Ovary (tissue), 10 donors: ENCODE measurements at regions of chr20 and their contacts with region 1.

Region 1: GRCh38 chr20:330233-331149 is 5.1 kb downstream of the SOX12 start:
- DNase-seq: peak; percentile 53 to 71 (median 56)
- H3K4me3 ChIP-seq: no peak overlapping the region
- H3K27ac ChIP-seq: no peak overlapping the region
- H3K4me1 ChIP-seq: peaks cover 5% of the 10 kb centered on the region
- H3K27me3 ChIP-seq: no peaks in the 10 kb centered on the region
- CTCF ChIP-seq: peak; percentile 60 to 82 (median 66)
- EP300 ChIP-seq: no peak
- POLR2A ChIP-seq: no peak

Region 2: DNA sequence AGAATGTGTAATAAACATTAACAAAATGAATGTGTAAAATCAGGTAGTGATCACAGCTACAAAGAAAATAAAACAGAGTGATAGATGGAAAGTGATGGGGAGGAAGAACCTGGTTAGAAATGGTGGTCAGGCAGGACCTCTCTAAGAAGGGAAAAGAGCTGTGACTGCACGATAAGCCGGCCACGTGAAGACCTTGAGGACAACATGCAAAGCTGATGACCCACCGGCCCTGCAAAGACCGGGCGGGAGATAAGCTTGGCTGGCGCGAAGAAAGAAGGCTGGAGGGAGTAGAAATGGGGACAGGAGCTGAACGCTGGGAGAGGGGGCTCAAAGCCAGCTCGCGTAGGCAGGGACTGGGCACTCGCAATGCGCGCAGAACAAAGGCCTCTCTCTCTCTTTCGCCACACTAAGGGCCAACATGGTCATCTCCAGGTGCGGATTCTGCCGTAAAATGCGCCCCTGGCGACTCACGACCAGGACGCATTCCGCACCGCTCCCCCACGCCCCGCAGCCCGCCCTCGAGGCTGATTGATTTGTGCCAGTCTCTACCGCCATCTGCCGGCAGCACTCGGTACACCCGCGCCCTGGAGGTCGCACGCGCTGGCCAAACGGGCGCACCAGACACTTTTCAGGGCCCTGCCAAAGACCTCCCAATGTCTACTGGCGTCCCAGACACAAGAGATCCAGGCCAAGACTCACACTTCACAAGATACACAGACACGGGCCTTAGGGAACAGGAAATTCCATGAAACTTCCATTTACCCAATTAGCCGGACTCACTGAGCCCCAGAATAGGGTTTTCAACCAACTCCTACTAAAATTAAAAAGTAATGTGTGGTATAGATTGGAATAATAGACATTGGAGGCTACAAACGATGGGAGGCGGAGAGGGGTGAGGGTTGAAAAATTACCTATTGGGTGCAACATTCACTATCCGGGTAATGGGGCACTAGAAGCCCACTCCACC is 63.6 kb before region 1 on chr20:
- intact Hi-C with region 1: loop called in 1 of 4 experiments (anchors 10 kb)
- DNase-seq: peak; percentile 81 to 92 (median 88)
- H3K4me3 ChIP-seq: peak overlapping the region; percentile 37
- H3K27ac ChIP-seq: no peak overlapping the region
- H3K4me1 ChIP-seq: no peaks in the 10 kb centered on the region
- H3K27me3 ChIP-seq: no peaks in the 10 kb centered on the region
- CTCF ChIP-seq: peak; percentile 83 to 88 (median 84)
- EP300 ChIP-seq: no peak
- POLR2A ChIP-seq: no peak